ENCODE measurements at regions of chr1 and their contacts with region 1.

Region 1: DNA sequence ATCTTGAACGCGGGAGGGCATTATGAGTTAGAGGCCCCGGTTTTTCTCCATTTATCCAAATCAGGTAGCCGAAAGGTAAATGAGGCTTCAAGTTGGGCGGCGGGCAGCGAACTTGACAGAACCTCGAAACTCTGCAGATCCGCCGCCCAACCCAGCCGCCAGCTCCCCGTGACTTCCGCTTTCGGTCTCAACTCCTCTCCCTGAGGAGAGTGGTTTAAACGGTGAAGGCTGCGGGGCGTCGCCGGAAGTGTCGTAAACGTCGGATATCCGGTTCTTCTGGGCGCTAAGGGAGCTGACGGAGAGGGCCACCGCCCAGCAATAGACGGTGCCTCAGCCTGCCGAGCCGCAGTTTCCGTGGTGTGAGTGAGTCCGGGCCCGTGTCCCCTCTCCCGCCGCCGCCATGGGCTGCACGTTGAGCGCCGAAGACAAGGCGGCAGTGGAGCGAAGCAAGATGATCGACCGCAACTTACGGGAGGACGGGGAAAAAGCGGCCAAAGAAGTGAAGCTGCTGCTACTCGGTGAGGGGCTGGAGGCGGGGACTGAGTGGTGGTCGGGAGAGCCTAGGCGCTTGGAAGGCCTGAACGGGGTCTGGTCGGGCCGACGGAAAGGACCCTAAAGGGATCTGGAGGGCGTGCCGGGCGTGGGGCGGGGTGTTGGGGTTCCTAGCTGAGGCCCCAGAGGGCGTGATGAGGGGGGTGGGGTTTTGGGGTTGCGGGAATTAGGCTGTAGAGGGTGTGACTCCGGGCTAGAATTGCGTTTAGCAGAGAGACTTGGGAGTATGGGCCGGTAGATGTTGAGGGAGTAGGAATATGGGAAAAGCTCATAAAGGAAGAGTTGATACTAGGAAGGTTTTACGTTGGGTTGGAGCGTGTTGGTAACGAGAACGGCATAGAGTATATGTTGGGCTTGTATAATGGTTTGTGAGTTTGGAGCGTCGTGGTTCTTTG is at the start of gene GNAI3:
- DNase-seq: peak; percentile 98
- H3K4me3 Mint-ChIP-seq: peak within 1 kb of the TSS; percentile 96
- H3K27ac Mint-ChIP-seq: peak within 1 kb of the TSS; percentile 98
- H3K4me1 Mint-ChIP-seq: peaks cover 49% of the 10 kb centered on the region
- H3K27me3 Mint-ChIP-seq: no peaks in the 10 kb centered on the region
- total RNA-seq, gene GNAI3: 8.8 to 9.7 TPM

Region 2: DNA sequence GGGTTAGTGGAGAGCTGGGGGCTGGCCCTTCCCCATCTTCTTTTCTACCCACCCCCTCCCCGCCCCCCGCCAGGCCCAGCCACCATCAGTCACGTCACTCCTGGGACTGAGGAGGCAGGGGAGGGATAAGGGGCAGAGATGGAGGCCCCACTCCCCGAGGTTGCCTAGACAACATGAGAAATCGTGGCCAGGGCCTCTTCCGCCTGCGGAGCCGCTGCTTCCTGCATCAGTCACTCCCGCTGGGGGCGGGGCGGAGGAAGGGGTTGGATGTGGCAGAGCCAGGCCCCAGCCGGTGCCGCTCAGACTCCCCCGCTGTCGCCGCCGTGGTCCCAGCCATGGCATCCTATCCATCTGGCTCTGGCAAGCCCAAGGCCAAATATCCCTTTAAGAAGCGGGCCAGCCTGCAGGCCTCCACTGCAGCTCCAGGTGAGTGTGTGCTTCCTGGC is 72.3 kb after region 1 on chr1:
- CTCF ChIA-PET with region 1: interaction called, 12 read pairs
- POLR2A ChIA-PET with region 1: interaction called, 4 read pairs
- DNase-seq: peak; percentile 99
- H3K4me3 Mint-ChIP-seq: peak overlapping the region; percentile 84
- H3K27ac Mint-ChIP-seq: peak overlapping the region; percentile 94
- H3K4me1 Mint-ChIP-seq: peaks cover 71% of the 10 kb centered on the region
- H3K27me3 Mint-ChIP-seq: no peaks in the 10 kb centered on the region

Region 3: GRCh38 chr1:109630081-109630897 is 81.7 kb after region 1 on chr1:
- CTCF ChIA-PET with region 1: interaction called, 35 read pairs
- POLR2A ChIA-PET with region 1: no interaction called
- DNase-seq: peak; percentile 41
- H3K4me3 Mint-ChIP-seq: no peak overlapping the region
- H3K27ac Mint-ChIP-seq: no peak overlapping the region
- H3K4me1 Mint-ChIP-seq: peaks cover 19% of the 10 kb centered on the region
- H3K27me3 Mint-ChIP-seq: no peaks in the 10 kb centered on the region